Esophagus muscularis mucosa (tissue), 4 donors: ENCODE measurements at regions of chr12 and their contacts with region 1.

Region 1: DNA sequence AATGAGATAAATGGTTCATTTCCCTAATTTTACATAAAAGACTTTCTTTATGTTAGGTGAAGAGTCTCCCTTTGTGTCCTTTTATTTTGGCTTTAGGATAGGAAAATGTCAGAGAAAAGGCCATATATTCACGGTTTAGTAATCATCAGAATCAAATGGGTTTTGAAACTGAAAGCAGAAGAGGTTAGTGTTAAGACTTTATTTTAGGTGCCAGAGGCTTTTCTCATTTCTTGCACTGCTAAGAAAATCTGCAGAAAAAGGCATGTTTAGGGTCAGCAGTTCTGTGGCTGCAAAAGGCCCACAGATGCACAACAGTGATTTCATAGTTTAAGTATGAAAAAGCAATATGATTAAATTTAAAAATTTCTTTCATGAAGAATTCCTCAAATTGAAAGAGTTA is 80.4 kb upstream of the SINHCAF start:
- DNase-seq: no peak
- H3K4me3 ChIP-seq: no peak overlapping the region
- H3K27ac ChIP-seq: no peak overlapping the region
- H3K4me1 ChIP-seq: peaks cover 0 to 7% (median 3%) of the 10 kb centered on the region in 4 donors
- H3K27me3 ChIP-seq: no peaks in the 10 kb centered on the region
- CTCF ChIP-seq: no peak
- EP300 ChIP-seq: no peak
- POLR2A ChIP-seq: no peak

Region 2: DNA sequence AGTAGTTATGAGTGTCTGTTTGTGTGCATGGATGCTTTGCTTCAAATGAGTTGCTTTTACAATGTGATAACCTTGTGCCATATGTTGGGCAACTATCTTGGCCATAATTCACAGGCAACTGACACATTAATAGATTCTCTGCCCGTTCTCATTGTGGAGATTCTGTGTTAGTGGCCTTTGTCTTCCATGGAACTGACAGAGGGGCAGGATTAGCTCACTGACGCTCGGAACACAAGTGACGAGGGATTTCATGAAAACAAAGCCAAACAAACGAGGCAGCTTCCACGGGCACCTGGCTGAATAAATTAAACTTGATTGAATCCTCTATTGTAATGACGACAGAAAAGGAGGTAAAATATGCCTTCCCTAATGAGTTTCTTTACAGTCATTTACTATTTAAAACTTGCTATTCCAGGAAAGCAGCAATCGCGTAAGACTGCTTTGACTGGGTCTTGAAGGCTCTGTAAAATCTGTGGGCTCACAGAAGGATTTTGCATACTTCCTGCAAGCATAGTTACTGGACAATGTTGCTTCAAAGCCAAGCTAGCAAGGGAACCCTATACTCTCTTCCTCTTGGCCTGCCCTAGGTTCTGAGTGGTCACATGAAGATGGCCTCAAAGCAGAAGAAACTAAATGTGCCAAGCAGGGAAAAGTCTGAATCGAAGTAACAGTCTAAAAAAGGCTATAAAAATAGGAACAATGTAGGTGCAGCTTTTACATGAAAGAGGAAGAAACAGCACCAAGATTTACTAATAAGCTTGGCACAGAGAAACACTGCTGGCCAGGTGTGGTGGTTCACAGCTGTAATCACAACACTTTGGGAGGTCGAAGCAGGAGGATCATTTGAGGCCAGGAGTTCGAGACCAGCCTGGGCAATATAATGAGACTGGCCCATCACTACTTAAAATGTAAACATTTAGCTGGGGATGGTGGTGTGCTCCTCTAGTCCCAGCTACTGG is 52.3 kb before region 1 on chr12:
- intact Hi-C with region 1: no loop called
- DNase-seq: no peak
- H3K4me3 ChIP-seq: no peak overlapping the region
- H3K27ac ChIP-seq: no peak overlapping the region
- H3K4me1 ChIP-seq: no peaks in the 10 kb centered on the region
- H3K27me3 ChIP-seq: no peaks in the 10 kb centered on the region
- CTCF ChIP-seq: no peak
- EP300 ChIP-seq: no peak
- POLR2A ChIP-seq: no peak

Region 3: DNA sequence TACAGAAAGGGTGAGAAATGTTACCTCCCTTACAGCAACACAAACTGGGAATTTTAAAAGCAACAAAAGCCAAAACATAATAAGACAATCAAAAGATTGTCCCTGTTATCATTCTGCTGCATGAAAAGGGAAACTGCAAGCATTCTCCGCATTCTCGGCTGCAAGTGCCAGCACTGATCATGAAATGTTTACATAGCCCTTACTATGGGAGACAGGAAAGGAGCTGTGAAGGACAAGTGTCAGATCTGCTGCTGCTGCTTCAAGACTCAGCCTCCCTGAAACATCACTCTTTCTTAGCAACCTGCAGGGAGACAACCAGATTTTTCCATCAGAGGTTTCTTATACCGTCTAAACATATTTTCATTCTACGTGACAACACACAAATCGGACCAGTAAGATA is 164.5 kb after region 1 on chr12:
- intact Hi-C with region 1: no loop called
- DNase-seq: no peak
- H3K4me3 ChIP-seq: no peak overlapping the region
- H3K27ac ChIP-seq: no peak overlapping the region
- H3K4me1 ChIP-seq: peaks cover 21 to 28% (median 24%) of the 10 kb centered on the region in 4 donors
- H3K27me3 ChIP-seq: no peaks in the 10 kb centered on the region
- CTCF ChIP-seq: no peak
- EP300 ChIP-seq: no peak
- POLR2A ChIP-seq: no peak

Region 4: GRCh38 chr12:31631784-31632183 is 225.4 kb after region 1 on chr12:
- intact Hi-C with region 1: loop called (anchors 1 kb)
- DNase-seq: no peak
- H3K4me3 ChIP-seq: no peak overlapping the region
- H3K27ac ChIP-seq: no peak overlapping the region
- H3K4me1 ChIP-seq: peaks cover 11 to 17% (median 13%) of the 10 kb centered on the region in 4 donors
- H3K27me3 ChIP-seq: no peaks in the 10 kb centered on the region
- CTCF ChIP-seq: no peak
- EP300 ChIP-seq: no peak
- POLR2A ChIP-seq: no peak